Ascending aorta (tissue), 2 donors: ENCODE measurements at regions of chr11 and their contacts with region 1.

Region 1: DNA sequence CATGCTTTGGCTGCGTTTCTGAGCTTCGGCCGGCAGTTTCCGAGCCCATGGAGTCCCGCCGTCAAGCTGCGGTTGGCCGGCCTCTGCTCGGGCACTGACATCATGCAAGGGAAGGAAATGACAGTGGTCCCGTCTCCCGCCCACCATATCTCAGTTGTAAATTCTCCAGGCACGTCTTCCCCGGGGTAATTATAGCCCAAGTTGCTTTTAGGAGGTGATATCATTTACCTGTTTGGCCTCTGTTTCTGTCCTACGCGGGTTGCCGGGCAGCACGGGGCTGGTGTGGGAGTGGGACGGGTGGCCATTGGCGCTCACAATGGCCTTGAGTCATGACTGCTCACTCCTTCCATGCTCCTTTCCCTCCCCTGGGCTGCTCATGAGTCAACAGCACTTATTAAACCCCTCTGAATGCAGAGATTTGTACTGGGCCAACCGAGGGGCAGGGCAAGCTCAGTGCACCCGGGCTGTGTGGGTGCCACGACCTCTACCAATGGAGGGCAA is 4.2 kb upstream of the ANO1 start:
- DNase-seq: peak in 1 of 2 donors; percentile 86
- H3K4me3 ChIP-seq: no peak overlapping the region
- H3K27ac ChIP-seq: peak overlapping the region; percentile 85 to 89
- H3K4me1 ChIP-seq: peaks cover 0 to 19% of the 10 kb centered on the region in 2 donors
- H3K27me3 ChIP-seq: no peaks in the 10 kb centered on the region
- CTCF ChIP-seq: no peak

Region 2: DNA sequence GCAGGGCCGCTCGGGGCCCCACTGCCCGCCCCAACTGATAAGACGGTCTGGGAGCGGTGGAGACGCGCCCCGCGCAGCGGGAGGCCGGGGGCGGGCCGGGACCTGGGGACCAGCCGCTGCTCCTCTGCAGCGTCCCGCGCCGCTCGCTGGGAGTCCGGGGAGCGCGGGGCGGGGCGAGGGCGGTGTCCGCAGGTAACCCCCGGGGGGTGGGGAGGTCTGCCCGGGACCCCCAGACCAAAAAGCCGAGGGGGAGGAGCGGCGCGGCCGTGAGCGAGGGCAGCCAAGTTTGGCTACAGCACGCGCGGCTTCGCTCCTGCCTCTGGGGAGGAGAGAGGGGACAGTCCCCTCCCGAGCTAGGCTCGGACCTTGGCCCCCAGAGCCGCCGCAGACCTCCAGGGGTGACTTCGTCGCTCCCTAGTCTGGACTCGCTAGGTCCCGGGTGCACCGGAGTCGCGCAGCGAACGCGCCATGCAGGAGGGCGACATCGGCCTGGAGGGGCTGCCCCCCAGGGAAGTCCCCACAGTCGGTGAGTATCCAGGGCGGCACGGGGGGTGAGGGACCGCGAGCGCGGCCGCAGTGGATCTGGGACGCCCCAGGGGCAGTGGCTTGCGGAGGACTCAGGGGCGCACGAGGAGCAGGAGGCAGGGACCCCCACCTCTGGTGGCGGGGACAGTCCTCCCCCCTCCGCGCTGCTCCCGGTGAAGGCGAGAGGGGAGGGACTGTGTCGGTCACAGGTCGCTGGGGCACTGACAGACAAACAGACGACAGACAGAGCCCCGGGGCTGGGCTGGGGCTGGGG is 88.1 kb before region 1 on chr11:
- intact Hi-C with region 1: loop called (anchors 2 kb)
- DNase-seq: no peak
- H3K4me3 ChIP-seq: peak overlapping the region; percentile 62 to 74
- H3K27ac ChIP-seq: peak overlapping the region; percentile 87 to 98
- H3K4me1 ChIP-seq: peaks cover 16 to 73% of the 10 kb centered on the region in 2 donors
- H3K27me3 ChIP-seq: no peaks in the 10 kb centered on the region
- CTCF ChIP-seq: no peak

Region 3: GRCh38 chr11:70029115-70029830 is 44.6 kb before region 1 on chr11:
- intact Hi-C with region 1: loop called (anchors 2 kb)
- DNase-seq: peak in 1 of 2 donors; percentile 56
- H3K4me3 ChIP-seq: no peak overlapping the region
- H3K27ac ChIP-seq: peak overlapping the region; percentile 71 to 80
- H3K4me1 ChIP-seq: peaks cover 7 to 15% of the 10 kb centered on the region in 2 donors
- H3K27me3 ChIP-seq: no peaks in the 10 kb centered on the region
- CTCF ChIP-seq: peak in 1 of 3 experiments; percentile 11

Region 4: GRCh38 chr11:70128435-70128906 is 54.5 kb after region 1 on chr11:
- intact Hi-C with region 1: loop called (anchors 2 kb)
- DNase-seq: peak in 1 of 2 donors; percentile 88
- H3K4me3 ChIP-seq: no peak overlapping the region
- H3K27ac ChIP-seq: peak overlapping the region; percentile 64 to 86
- H3K4me1 ChIP-seq: peaks cover 29 to 51% of the 10 kb centered on the region in 2 donors
- H3K27me3 ChIP-seq: no peaks in the 10 kb centered on the region
- CTCF ChIP-seq: peak; percentile 32 to 52 (median 33)